ENCODE measurements at regions of chr4 and their contacts with region 1.

Region 1: DNA sequence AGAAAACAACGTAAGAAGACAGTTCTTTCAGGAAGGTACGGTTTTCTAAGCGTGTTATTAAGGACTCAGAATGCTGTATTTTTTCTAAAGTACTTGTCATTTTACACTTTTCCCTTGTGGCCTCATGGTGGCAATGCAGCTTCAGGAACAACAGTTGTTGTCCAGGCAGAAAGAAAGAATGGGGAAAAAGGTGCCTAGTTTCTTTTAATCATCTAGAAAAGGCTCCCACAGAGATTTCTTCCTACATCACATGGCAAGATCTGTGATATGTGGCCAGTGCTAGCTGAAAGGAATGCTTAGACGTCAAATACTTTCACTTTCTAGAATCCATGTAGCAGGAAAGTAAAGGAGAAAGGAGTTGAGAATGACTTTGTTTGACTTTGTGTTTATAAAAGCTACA is 49.0 kb upstream of the TRAM1L1 start:
- DNase-seq: peak; percentile 83
- H3K4me3 ChIP-seq: no peak overlapping the region
- H3K27ac ChIP-seq: no peak overlapping the region
- H3K4me1 ChIP-seq: no peaks in the 10 kb centered on the region
- H3K27me3 ChIP-seq: no peaks in the 10 kb centered on the region
- CTCF ChIP-seq: peak; percentile 71

Region 2: DNA sequence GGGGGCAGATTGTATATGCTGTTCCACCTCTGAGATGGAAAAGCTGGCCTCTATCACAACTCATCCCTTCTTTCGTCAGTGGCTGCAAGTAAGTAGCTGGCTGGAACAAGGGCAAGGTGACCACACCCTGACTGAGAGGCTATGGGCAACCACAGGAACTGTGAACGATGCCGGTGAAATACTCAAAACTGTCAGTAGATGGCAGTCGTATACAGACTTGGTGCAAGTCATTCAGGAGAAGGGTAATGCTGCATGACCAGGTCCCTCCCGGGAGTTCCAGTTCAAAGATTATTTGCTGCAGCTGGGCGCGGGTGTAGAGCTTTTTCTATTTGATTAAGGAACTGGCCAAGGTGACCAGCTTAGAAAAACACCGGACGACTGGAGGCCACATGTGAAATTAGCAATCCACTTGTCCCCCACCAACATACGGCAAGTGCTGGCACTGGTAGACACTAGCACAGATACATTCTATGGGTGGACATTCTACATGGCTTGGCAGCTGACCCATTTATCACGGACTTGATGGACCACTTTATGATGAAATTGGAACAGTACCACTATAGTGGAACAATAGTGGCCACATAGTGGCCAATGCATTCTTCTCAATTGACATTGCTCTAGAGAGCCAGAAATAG is 775.7 kb before region 1 on chr4:
- CTCF ChIA-PET with region 1: no interaction called
- POLR2A ChIA-PET with region 1: no interaction called
- intact Hi-C with region 1: loop called (anchors 5 kb)
- DNase-seq: peak; percentile 89
- H3K4me3 ChIP-seq: no peak overlapping the region
- H3K27ac ChIP-seq: no peak overlapping the region
- H3K4me1 ChIP-seq: no peaks in the 10 kb centered on the region
- H3K27me3 ChIP-seq: no peaks in the 10 kb centered on the region
- CTCF ChIP-seq: peak; percentile 74

Region 3: DNA sequence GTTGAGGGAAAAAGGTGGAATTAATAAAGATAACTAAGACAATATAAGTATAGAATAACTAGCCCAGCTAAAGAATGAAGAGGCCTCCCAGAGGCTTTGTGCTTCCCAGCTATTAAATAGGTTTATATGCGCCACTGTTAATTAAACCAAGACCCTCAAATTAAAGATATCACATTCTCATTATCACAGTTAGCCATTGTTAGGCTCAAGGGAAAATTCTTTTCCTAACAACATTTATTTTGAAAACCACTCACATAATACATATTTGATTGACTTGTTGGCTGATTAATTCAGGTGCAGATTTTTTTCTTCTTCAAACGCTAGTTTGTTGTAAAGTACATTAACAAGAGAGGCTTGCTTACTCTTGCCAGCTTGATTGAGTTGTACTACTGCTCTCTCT is 167.8 kb after region 1 on chr4:
- CTCF ChIA-PET with region 1: no interaction called
- POLR2A ChIA-PET with region 1: no interaction called
- intact Hi-C with region 1: no loop called
- DNase-seq: no peak
- H3K4me3 ChIP-seq: no peak overlapping the region
- H3K27ac ChIP-seq: no peak overlapping the region
- H3K4me1 ChIP-seq: no peaks in the 10 kb centered on the region
- H3K27me3 ChIP-seq: no peaks in the 10 kb centered on the region
- CTCF ChIP-seq: no peak

Region 4: GRCh38 chr4:117560329-117560728 is 425.9 kb after region 1 on chr4:
- CTCF ChIA-PET with region 1: interaction called, 3 read pairs
- POLR2A ChIA-PET with region 1: no interaction called
- intact Hi-C with region 1: loop called (anchors 5 kb)
- DNase-seq: peak; percentile 63
- H3K4me3 ChIP-seq: no peak overlapping the region
- H3K27ac ChIP-seq: no peak overlapping the region
- H3K4me1 ChIP-seq: no peaks in the 10 kb centered on the region
- H3K27me3 ChIP-seq: no peaks in the 10 kb centered on the region
- CTCF ChIP-seq: peak; percentile 40

Region 5: DNA sequence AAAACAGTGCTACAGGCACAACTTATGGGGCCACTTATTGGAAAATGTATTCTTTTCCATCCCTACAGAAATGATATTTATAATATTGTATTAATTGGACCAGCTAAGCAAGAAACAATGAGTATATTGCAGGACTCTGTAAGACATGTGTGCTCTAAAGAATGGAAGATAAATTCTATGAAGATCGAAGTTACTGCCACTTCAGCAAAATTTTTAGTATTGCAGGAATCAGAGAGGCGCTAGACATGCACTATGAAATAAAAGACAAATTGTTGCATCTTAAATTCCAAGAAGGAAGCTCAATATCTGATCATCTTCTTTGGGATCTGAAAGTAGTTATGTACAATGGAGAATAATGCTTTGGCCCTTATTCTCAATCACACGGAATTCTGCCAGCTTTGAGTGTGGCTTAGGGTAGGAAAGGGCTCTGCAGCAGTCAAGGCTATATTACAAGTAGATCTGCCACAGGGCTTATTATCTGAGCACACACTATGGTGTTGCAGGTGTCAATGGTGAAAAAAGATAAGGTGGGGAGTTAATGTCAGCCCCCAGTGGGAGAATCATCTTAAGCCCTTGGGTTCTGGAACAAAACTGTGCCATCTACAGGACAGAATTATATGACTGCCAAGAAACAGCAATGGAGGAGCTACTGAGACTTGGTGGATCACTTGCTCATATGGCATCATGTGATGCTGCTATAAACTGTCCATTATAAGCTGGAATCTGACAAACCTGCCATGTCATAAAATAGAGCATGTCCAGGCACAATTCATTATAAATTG is 565.9 kb after region 1 on chr4:
- CTCF ChIA-PET with region 1: no interaction called
- POLR2A ChIA-PET with region 1: no interaction called
- intact Hi-C with region 1: loop called (anchors 10 kb)
- DNase-seq: peak; percentile 22
- H3K4me3 ChIP-seq: no peak overlapping the region
- H3K27ac ChIP-seq: no peak overlapping the region
- H3K4me1 ChIP-seq: no peaks in the 10 kb centered on the region
- H3K27me3 ChIP-seq: no peaks in the 10 kb centered on the region
- CTCF ChIP-seq: peak; percentile 60

Region 6: GRCh38 chr4:118034053-118034785 is 899.8 kb after region 1 on chr4 and contains the start of gene NDST3:
- CTCF ChIA-PET with region 1: interaction called, 4 read pairs
- POLR2A ChIA-PET with region 1: no interaction called
- intact Hi-C with region 1: loop called (anchors 1 kb)
- DNase-seq: peak; percentile 89
- H3K4me3 ChIP-seq: peak within 1 kb of the TSS; percentile 70
- H3K27ac ChIP-seq: no peak within 1 kb of the TSS
- H3K4me1 ChIP-seq: peaks cover 6% of the 10 kb centered on the region
- H3K27me3 ChIP-seq: no peaks in the 10 kb centered on the region
- CTCF ChIP-seq: peak; percentile 77
- total RNA-seq, gene NDST3: 2.6 and 3.0 TPM in 2 replicates

Region 7: DNA sequence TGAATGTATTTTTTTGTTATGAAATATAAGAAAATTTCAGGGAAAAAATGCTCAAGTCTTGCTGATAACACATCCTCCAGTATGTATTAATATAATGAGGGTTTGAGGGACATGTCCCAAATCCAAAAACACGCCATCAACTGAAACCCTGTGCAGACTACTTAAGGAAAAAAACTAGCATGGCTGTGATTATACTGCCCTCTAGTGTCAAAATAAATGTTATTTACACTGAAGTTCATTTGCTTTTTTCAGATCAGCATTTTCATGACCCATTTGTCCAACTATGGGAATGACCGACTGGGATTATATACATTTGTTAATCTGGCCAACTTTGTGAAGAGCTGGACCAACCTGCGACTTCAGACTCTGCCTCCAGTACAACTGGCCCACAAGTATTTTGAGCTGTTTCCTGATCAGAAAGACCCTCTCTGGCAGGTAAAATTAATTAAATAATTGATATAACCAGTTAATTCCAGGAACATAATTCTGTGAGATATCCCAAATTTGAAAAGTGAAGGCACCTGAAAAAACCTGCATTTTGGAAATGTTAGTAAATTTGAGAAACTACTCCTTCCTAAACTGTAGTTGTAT is 1089.9 kb after region 1 on chr4:
- CTCF ChIA-PET with region 1: no interaction called
- POLR2A ChIA-PET with region 1: no interaction called
- intact Hi-C with region 1: loop called (anchors 10 kb)
- DNase-seq: peak; percentile 78
- H3K4me3 ChIP-seq: no peak overlapping the region
- H3K27ac ChIP-seq: no peak overlapping the region
- H3K4me1 ChIP-seq: no peaks in the 10 kb centered on the region
- H3K27me3 ChIP-seq: no peaks in the 10 kb centered on the region
- CTCF ChIP-seq: peak; percentile 65

Region 8: DNA sequence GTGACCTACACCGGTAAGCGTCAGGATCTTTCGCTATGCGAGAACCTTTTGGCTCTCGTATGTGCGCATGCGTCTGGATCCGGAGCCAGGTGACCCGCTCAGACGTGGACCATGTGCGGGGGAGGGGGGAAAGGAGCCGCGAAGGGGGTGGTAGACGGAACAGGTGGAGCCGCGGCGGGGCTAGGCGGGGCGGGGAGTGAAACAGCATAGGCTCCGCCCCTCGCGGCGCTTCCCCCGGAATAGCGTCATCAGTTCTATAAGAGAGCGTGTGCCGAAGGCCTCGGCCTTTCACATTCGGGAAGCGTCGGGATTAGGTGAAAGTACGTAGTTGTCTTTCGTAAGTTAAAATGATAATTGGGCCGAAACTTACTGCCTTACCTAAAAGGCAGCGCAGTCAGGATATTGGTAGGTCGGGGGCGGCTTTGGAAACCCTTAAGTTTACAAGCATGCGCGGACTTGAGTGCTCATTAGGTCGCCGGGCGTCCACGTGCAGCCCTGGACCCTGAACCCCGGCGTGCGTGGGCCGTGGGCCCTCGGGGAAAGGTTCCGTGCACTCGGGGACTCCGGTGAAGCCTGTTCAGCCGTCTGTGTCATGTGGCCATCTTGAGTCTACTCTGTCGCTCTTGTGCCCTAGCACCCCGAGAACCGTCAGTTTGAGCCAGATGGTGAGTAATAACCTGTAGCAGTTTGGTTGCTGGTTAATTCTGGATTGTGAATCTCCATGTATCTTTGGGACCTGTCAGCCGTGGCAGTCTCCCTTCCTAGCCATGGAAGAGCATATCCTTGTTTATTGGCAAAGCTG is 1144.3 kb after region 1 on chr4:
- CTCF ChIA-PET with region 1: no interaction called
- POLR2A ChIA-PET with region 1: no interaction called
- intact Hi-C with region 1: loop called (anchors 10 kb)
- DNase-seq: peak; percentile 96
- H3K4me3 ChIP-seq: peak overlapping the region; percentile 83
- H3K27ac ChIP-seq: peak overlapping the region; percentile 94
- H3K4me1 ChIP-seq: peaks cover 15% of the 10 kb centered on the region
- H3K27me3 ChIP-seq: no peaks in the 10 kb centered on the region
- CTCF ChIP-seq: no peak

Measured in A673 (cell line).